SK-N-SH (cell line): ENCODE measurements at regions of chr20 and their contacts with region 1.

Region 1: DNA sequence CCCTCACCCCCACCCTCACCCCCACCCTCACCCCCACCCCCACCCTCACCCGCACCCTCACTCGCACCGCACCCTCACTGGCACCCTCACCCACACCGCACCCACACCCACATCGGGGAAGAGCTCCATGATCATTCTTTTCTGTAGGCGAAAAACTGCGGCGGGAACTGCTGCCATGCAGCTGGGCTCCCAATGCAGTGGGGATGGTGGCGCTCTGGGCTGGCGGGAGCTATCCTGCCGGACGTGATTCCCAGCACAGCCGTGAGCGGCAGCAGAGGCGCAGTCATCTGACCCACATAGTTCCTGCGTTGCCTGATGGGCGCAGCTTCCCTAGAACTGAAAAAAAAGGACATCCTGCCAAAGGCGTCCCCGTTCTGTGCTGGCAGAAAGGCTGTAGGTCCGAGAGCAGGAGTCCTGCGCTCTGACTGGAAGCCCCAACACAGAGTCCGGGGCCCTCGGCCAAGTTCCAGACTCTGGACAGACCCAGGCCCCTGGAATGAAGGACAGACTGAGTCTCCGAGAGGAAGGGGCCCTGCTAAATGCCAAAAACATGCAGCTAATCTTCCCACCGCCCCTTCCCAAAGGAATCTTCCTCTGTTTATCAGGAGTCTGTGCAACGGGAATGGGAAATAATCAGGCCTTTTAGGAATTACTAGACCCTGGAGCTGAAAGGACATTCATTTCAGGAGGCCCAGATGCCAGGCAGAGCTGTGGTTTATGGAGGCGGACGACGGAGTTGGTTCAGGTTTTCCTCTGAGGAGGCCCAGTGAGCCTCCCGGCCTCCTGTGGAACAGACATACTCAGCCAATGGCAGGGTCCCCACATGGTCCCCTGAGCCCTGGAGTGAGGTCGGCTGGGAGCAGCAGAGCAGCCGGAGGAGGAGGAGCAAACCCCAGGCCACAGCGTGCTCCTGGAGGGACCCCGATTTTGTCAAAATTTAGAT is 14.1 kb upstream of the TCFL5 start:
- DNase-seq: peak; percentile 93
- H3K4me3 ChIP-seq: peak overlapping the region in 1 of 2 experiments; percentile 31; a peak in 3 of 4 replicates
- H3K27ac ChIP-seq: peak overlapping the region; percentile 82 to 93
- H3K4me1 ChIP-seq: peaks cover 4 to 19% of the 10 kb centered on the region in 2 experiments; a peak in 3 of 4 replicates
- H3K27me3 ChIP-seq: no peaks in the 10 kb centered on the region
- CTCF ChIP-seq: peak; percentile 58
- EP300 ChIP-seq: peak in 1 of 2 experiments; percentile 26; a peak in 2 of 4 replicates
- RAD21 ChIP-seq: peak; percentile 59

Region 2: GRCh38 chr20:62861726-62862336 is 13.9 kb before region 1 on chr20 and contains the start of gene TCFL5:
- CTCF ChIA-PET with region 1: interaction called, 24 read pairs
- POLR2A ChIA-PET with region 1: interaction called, 5 read pairs
- DNase-seq: peak; percentile 99
- H3K4me3 ChIP-seq: peak within 1 kb of the TSS; percentile 63 to 68
- H3K27ac ChIP-seq: no peak within 1 kb of the TSS
- H3K4me1 ChIP-seq: peaks cover 10 to 16% of the 10 kb centered on the region in 2 experiments; a peak in 3 of 4 replicates
- H3K27me3 ChIP-seq: no peaks in the 10 kb centered on the region
- CTCF ChIP-seq: no peak
- EP300 ChIP-seq: no peak
- RAD21 ChIP-seq: no peak
- polyA plus RNA-seq, gene TCFL5: 10.1 and 11.2 TPM in 2 replicates

Region 3: DNA sequence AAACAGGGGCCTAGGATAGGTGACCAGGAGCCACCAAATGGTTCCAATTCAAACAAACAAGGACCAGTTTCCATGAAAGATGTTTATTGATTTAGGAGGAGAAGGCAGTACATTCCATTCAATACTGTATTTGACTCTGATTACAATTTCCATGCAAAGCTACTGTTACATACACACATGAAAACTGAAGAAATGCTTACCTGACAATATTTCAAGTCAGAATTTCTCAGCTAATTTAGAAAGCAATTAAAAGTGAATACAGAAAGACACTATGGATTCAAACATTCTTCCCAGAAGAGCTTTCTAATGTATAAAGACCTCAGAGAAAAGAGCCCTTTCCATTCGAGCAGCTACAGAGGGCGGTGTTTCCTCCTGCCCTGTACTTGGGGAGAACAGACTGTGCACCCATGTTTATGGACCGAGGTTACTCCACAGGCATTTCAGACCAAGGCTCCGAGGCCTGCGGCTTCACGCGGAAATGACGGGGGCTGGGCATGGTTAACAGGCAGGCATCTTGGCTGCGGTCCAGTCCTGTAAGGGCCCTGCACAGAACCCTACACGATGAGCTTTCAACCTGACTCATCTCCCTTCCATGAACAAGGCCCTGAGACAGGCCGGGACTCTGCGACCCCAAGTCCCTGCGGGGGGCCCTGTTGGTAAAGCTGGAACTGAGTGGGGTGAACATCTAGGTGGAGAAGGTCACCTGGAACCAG is 11.6 kb after region 1 on chr20:
- CTCF ChIA-PET with region 1: interaction called, 31 read pairs
- POLR2A ChIA-PET with region 1: interaction called, 14 read pairs
- DNase-seq: peak; percentile 80
- H3K4me3 ChIP-seq: no peak overlapping the region
- H3K27ac ChIP-seq: peak overlapping the region; percentile 65 to 79
- H3K4me1 ChIP-seq: peaks cover 17 to 19% of the 10 kb centered on the region in 2 experiments
- H3K27me3 ChIP-seq: no peaks in the 10 kb centered on the region
- CTCF ChIP-seq: no peak
- EP300 ChIP-seq: no peak
- RAD21 ChIP-seq: no peak

Region 4: DNA sequence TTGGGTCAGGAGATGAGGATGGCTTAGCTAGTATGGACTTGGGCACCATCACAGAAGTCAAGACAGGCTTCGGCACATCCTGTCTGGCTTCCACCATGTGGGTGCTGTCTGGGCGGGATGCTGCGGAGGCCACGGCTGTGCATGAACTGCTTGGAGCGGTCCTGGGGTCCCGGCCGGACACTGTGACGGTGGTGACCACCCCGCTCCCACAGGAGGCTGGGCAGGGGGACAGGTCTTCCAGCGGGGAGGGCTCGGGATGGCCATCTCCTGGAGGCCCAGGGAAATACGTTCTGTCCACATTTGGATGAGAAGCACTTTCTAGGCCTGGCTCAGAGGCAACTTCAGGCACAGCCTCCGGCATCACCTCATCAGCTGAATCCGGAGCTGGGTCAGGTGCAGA is 18.0 kb after region 1 on chr20:
- CTCF ChIA-PET with region 1: interaction called, 86 read pairs
- POLR2A ChIA-PET with region 1: interaction called, 3 read pairs
- DNase-seq: peak; percentile 57
- H3K4me3 ChIP-seq: no peak overlapping the region
- H3K27ac ChIP-seq: no peak overlapping the region
- H3K4me1 ChIP-seq: no peaks in the 10 kb centered on the region; a peak in 1 of 4 replicates
- H3K27me3 ChIP-seq: no peaks in the 10 kb centered on the region
- CTCF ChIP-seq: peak; percentile 32; the same call in 1 of the 2 replicates
- EP300 ChIP-seq: no peak
- RAD21 ChIP-seq: no peak

Region 5: DNA sequence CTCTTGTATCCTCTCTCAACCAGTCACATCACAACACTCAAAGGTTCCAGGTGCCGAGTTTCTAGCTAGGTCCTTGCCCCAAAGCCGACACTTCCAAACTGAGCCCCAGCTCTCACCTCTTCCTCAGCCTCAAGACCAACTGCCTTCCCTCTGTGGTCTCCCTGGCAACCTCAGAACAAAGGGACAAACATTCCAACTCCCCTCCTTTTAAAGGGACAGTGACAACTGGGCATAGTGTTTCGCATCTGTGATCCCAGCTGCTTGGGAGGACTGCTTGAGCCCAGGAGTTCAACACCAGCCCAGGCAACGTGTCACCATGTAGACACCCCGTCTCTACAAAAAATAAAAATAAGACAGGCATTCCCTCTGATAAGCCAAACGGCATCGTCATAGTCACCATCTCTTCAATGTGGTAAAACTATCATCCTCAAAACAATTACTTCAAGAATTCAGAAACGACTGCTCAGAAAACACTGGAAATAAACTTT is 39.3 kb after region 1 on chr20:
- CTCF ChIA-PET with region 1: interaction called, 13 read pairs
- POLR2A ChIA-PET with region 1: no interaction called
- DNase-seq: peak; percentile 49
- H3K4me3 ChIP-seq: no peak overlapping the region
- H3K27ac ChIP-seq: no peak overlapping the region
- H3K4me1 ChIP-seq: peaks cover 0 to 13% of the 10 kb centered on the region in 2 experiments; a peak in 2 of 4 replicates
- H3K27me3 ChIP-seq: no peaks in the 10 kb centered on the region
- CTCF ChIP-seq: no peak
- EP300 ChIP-seq: no peak
- RAD21 ChIP-seq: no peak

Region 6: GRCh38 chr20:62952373-62952967 is 76.8 kb after region 1 on chr20 and contains the start of gene SLC17A9:
- CTCF ChIA-PET with region 1: no interaction called
- POLR2A ChIA-PET with region 1: no interaction called
- DNase-seq: no peak
- H3K4me3 ChIP-seq: no peak within 1 kb of the TSS
- H3K27ac ChIP-seq: no peak within 1 kb of the TSS
- H3K4me1 ChIP-seq: peaks cover 0 to 5% of the 10 kb centered on the region in 2 experiments; a peak in 1 of 4 replicates
- H3K27me3 ChIP-seq: no peaks in the 10 kb centered on the region
- CTCF ChIP-seq: no peak
- EP300 ChIP-seq: no peak
- RAD21 ChIP-seq: no peak
- polyA plus RNA-seq, gene SLC17A9: not detected in 2 replicates

Region 7: DNA sequence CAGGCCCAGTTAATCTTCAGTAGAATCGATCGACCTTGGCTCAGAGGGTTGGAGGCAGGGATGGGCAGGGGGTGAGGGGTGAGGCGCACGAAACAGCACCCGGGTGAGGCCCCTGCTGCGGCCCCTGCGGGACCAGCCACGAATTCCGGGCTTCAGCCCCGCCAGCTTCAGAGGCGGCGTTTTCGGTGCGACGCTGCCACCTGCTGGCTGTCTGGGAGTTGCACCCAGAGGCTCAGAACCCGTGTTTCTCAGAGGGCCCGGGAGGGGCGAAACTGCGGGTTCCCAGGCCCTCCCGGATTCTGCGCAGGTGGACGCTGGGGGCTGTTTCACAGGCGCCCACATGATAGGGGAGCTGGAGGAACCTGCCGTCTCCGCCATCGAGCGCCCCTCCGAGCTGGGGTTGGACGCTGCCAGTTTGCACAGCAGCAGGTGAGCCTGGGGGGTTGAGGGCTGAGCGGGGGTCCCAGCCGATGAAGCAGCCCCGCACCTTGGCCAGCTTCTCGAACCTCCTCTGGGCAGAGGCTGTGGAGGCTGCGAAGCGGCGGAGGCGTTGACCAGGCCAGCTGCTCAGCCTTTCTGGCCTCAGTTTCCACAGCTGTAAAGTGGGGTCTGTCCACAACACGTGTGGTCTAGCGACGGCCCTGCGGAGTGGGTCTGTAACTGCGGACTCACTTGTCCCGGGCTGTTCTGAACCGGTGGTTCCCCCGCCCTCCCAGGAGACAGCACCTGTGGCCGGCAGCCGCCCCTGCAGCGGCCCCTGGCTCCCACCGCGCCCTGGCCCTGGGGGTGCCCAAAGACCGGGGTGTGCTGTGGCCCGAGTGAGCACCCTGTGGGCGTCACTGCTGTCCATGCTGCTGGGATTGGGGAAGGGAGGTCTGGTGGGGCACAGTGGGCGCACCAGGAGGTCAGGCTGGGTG is 133.6 kb after region 1 on chr20:
- CTCF ChIA-PET with region 1: interaction called, 29 read pairs
- POLR2A ChIA-PET with region 1: interaction called, 4 read pairs
- DNase-seq: peak; percentile 95
- H3K4me3 ChIP-seq: no peak overlapping the region; a peak in 1 of 4 replicates
- H3K27ac ChIP-seq: no peak overlapping the region
- H3K4me1 ChIP-seq: peaks cover 0 to 3% of the 10 kb centered on the region in 2 experiments; a peak in 1 of 4 replicates
- H3K27me3 ChIP-seq: peaks cover 92% of the 10 kb centered on the region
- CTCF ChIP-seq: peak; percentile 90
- EP300 ChIP-seq: no peak
- RAD21 ChIP-seq: peak; percentile 90